ENCODE measurements at regions of chr1 and their contacts with region 1.

Region 1: GRCh38 chr1:225694151-225694603 is 41.3 kb upstream of the ENAH start:
- DNase-seq: peak; percentile 62 to 75 (median 66)
- ATAC-seq: peak; percentile 97 to 98
- H3K4me3 ChIP-seq: no peak overlapping the region
- H3K27ac ChIP-seq: peak overlapping the region; percentile 60
- H3K4me1 ChIP-seq: peaks cover 19% of the 10 kb centered on the region
- H3K27me3 ChIP-seq: no peaks in the 10 kb centered on the region

Region 2: GRCh38 chr1:225735252-225736149 is 41.3 kb after region 1 on chr1:
- intact Hi-C with region 1: loop called in 1 of 4 experiments (anchors 5 kb)
- DNase-seq: peak; percentile 87 to 91 (median 89)
- ATAC-seq: peak; percentile 95 to 98
- H3K4me3 ChIP-seq: no peak overlapping the region
- H3K27ac ChIP-seq: peak overlapping the region; percentile 69
- H3K4me1 ChIP-seq: peaks cover 13% of the 10 kb centered on the region
- H3K27me3 ChIP-seq: no peaks in the 10 kb centered on the region

Region 3: DNA sequence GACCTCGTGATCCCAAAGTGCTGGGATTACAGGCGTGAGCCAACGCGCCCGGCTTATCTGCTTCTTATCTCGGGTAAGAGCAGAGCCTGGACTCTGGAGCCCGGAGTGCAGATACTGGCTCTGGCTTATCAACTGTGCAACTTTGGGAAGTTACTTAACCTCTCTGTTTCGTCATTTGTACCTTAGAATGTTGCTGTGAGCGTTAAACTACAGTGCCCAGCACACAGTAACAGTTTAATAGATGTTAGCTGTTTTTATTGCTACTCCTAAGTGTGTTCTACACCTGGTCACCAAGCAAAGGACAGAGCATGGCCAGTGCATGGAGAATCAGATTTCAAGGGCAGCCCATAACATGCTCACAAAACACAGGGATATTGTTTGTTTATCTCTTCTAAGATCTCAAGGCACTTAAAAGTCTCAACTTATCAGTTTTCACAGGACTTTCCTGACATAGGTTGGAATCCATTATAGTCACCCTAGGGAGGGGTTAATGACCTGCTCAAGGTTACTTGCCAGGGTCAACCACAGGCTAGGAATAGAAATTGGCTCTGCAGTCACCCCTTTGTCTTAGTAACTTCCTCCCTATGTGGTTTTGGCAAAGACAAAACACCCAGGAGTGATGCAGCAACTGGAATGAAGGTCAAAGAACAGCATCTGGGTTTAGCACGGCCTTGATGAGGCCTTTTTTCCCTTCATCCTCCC is 60.9 kb after region 1 on chr1:
- intact Hi-C with region 1: loop called in 1 of 4 experiments (anchors 10 kb)
- DNase-seq: peak; percentile 79 to 91 (median 86)
- ATAC-seq: peak; percentile 91 to 92
- H3K4me3 ChIP-seq: no peak overlapping the region
- H3K27ac ChIP-seq: peak overlapping the region; percentile 64
- H3K4me1 ChIP-seq: peaks cover 13% of the 10 kb centered on the region
- H3K27me3 ChIP-seq: no peaks in the 10 kb centered on the region

Region 4: DNA sequence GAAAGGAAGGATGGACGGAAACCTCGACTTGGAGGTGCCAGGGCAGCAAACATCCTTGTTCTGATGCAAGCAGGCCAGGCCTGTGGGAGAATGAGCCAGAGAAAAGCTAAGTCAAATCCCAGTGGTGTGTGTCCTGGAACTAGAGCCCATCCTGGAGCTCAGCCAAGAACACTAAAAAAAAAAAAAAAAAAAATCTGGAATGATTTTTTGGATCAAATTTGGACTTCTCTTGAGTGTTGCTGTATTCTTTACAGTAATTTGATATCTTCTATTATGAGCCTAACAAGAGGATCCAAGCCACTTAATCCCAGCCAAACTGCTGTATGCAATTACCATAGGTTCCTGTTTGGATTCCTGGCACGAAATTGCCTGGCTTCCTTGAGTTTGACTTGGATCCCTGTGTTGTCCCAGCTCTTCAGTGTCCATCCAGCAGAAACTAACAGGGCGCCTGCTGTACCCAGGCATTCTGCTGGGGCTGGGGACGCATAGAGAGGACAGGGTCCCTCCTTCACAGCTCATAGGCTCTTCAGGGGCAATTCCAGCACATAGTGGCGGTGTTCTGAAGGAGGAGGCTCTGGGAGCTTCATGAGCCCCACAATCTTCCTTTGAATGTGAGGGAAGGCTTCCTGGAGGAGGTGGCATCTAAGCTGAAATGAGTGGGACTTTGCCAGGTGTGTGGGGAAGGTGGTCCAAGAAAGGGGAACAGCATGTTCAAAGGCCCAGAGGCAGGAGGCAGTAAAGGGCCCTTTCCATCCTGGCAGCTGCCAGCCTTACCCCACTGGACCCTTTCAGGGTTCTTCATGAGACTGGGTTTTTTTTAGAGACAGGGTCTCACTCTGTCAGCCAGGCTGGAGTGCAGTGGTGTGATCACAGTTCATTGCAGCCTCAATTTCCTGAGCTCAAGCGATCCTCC is 140.5 kb after region 1 on chr1:
- intact Hi-C with region 1: no loop called
- DNase-seq: peak; percentile 83 to 90 (median 90)
- ATAC-seq: peak; percentile 86 to 94
- H3K4me3 ChIP-seq: no peak overlapping the region
- H3K27ac ChIP-seq: peak overlapping the region; percentile 87
- H3K4me1 ChIP-seq: peaks cover 3% of the 10 kb centered on the region
- H3K27me3 ChIP-seq: no peaks in the 10 kb centered on the region